Cardiac septum (tissue), 1 donor: ENCODE measurements at regions of chr21 and their contacts with region 1.

Region 1: GRCh38 chr21:42593007-42593806 is 60.2 kb upstream of the PDE9A start:
- DNase-seq: no peak

Region 2: DNA sequence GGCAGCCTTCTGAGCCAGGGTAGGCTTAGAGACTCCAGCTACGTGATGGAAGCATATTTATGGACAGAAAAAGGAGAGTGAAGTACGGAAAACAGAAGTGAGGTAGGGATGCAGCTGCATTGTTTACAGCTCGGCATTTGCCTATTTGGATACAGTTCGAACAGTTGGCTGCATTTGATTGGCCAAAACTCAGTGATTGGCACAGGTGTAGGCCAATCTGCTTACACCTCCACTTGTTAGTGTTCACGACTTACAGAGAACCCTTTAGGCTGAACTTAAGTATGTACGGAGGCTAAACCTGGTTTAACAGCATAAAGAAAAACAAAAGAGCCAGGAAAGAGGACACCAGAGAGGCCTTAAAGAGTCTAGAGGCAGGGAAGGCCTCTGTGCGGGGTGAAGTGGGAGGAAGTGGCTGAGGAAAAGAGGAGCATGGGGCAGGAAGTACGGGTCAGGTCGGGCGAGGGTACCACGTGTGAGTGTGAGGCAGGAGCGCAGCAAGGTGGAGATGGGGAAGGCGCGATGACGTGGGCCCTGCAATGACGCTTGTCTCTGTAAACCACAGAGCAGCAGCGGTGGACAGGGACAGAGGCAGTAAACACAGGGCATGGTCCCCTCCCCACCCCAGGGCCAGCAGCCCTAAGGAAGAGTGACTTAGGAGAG is 129.2 kb before region 1 on chr21:
- intact Hi-C with region 1: no loop called
- DNase-seq: peak; percentile 74

Region 3: DNA sequence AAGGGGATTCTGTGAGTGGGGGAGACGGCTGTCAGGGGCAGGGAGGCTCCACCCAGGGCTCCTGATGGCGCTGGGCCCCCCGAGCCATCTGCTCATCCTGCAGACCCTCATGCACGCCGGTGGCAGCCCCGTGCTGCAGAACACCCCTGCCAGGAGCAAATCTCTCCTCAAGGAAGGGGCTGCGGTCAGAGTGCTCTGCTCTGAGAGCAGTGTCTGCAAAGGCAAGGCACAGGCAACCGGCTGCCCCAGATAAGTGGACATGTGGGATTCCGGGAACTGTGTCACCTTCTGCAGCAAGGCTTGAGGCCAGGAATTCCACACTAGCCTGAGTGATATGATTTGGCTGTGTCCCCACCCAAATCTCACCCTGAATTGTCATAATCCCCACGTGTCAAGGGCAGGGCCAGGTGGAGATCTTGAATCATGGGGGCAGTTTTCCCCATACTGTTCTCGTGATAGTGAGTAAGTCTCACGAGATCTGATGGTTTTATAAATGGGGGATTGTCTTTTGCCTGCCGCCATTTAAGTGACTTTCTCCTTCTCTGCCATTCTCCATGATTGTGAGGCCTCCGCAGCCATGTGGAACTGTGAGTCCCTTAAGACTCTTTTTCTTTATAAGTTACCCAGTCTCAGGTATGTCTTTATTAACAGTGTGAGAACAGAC is 161.2 kb after region 1 on chr21:
- intact Hi-C with region 1: no loop called
- DNase-seq: no peak

Region 4: DNA sequence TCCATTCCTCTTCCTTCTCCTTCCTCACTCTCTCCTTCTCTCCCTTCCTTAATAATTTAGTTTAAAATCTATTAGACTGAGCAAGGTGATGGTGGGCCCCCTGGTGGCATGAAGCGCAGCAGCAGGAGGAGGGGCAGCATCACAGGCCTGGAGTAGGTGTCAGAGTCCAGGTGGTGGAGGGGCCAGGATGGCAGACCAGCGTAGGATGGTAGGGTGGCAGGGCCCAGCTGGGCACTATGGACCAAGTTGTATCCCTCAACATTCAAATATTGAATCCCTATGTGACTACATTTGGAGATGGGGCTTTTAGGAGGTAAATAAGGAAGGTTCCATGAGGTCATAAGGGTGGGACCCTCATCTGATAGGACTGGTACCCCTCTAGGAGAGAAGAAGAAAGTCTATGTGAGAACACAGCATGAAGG is 225.1 kb after region 1 on chr21:
- intact Hi-C with region 1: loop called (anchors 2 kb)
- DNase-seq: peak; percentile 86

Region 5: DNA sequence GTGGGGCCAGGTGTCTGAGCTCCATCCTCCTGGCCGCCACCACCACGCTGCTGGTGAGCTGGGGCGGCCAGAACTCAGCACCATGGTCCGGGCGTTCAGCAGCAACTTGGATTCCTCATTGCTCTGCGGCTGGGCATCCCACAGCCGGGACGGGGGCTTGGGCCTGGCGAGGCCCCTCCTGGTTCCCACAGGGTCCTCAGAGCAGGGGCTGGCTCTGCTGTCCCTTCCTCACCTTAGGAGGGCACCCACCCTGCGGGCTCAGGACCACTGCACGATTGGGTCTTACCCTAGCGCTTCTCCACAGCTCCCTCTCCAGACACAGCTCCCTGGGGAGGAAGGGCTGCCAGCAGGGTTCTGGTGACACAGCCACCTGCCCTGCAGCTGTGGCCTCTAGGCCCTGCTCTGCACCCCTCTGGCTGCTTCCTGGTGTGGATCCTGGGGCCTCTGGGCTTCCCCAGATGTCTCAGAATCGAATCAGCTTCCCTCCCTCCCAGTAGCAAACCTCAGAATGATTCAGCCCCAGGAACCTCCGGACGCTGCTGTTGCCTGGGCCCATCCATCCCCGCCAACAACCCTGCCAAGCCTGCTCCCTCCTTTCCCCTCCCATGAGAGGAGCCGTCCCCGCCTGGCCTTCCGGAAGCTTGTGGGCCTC is 600.6 kb after region 1 on chr21:
- intact Hi-C with region 1: no loop called
- DNase-seq: peak; percentile 71